ENCODE measurements at regions of chrX and their contacts with region 1.

Region 1: GRCh38 chrX:129637217-129638109 is 17.3 kb downstream of the APLN start:
- DNase-seq: peak; percentile 74
- H3K4me3 Mint-ChIP-seq: no peak overlapping the region
- H3K27ac Mint-ChIP-seq: no peak overlapping the region
- H3K4me1 Mint-ChIP-seq: peaks cover 7% of the 10 kb centered on the region
- H3K27me3 Mint-ChIP-seq: no peaks in the 10 kb centered on the region

Region 2: GRCh38 chrX:129553619-129554288 is 83.7 kb before region 1 on chrX:
- CTCF ChIA-PET with region 1: no interaction called
- POLR2A ChIA-PET with region 1: no interaction called
- DNase-seq: no peak
- H3K4me3 Mint-ChIP-seq: no peak overlapping the region
- H3K27ac Mint-ChIP-seq: no peak overlapping the region
- H3K4me1 Mint-ChIP-seq: no peaks in the 10 kb centered on the region
- H3K27me3 Mint-ChIP-seq: no peaks in the 10 kb centered on the region

Region 3: DNA sequence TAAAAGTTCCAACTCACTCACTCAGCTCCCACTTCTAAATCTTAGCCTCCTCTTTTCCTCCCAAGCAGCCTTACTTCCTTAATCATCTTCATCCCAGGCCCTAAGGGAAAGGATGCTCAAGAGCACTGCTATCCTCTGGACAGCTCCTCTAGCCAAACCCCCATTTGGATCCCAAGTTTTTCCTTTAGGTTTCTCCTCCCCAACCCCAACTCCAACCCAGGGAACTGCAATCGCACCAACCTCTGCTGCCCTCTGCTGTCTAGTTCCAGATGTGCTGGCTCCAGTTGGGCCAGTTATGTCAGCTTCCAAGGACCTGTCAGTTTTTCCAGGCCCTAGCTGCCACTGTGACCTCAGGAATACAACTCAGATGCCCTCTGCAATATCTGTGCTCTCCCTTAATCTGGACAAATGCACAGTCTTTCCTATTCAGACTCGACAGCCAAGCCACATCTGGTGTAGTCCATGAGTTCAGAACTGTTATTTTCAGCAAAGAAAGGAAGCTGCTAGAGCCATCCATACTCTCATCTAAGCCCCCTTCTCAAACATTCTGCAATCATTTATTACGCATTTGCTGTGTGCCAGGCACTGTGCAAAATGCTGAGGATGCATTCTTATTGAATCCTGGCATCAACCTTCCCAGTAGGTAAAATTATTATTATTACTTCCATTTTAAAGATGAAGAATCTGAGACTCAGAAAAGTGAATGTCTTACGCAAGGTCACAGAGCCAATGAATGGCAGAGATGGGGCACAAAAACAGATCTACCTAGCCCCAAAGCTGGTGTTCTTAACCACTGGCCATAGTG is 89.0 kb after region 1 on chrX:
- CTCF ChIA-PET with region 1: interaction called, 20 read pairs
- POLR2A ChIA-PET with region 1: interaction called, 3 read pairs
- DNase-seq: peak; percentile 30
- H3K4me3 Mint-ChIP-seq: no peak overlapping the region
- H3K27ac Mint-ChIP-seq: no peak overlapping the region
- H3K4me1 Mint-ChIP-seq: peaks cover 37% of the 10 kb centered on the region
- H3K27me3 Mint-ChIP-seq: no peaks in the 10 kb centered on the region

Measured in activated CD4-positive, alpha-beta memory T cell treated with anti-CD3 and anti-CD28 coated beads, Interleukin-2, amount 10 ng/mL, durations not matched to agents 7 days and 5 days (primary cell).